MCF 10A (cell line): ENCODE measurements at regions of chr5 and their contacts with region 1.

Region 1: DNA sequence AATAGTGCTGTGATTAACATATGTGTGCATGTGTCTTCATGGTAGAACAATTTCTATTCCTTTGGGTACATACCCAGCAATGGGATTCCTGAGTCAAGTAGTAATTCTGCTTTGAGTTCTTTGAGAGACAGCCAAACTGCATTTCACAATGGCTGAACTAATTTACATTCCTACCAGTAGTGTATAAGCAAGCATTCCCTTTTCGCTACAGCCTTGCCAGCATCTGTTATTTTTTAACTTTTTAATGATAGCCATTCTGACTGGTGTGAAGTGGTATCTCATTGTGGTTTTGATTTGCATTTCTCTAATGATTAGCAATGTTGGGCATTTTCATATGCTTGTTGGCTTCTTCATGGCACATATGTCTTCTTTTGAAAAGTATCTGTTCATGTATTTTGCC is 308.5 kb downstream of the ARRDC3 start:
- DNase-seq: peak; percentile 41
- H3K4me3 Mint-ChIP-seq: no peak overlapping the region
- H3K27ac Mint-ChIP-seq: peak overlapping the region; percentile 28
- H3K4me1 Mint-ChIP-seq: peaks cover 38% of the 10 kb centered on the region
- H3K27me3 Mint-ChIP-seq: no peaks in the 10 kb centered on the region
- CTCF ChIP-seq: peak; percentile 15

Region 2: GRCh38 chr5:91059409-91059808 is 15.2 kb before region 1 on chr5:
- CTCF ChIA-PET with region 1: interaction called, 8 read pairs
- POLR2A ChIA-PET with region 1: interaction called, 21 read pairs
- intact Hi-C with region 1: no loop called
- DNase-seq: no peak
- H3K4me3 Mint-ChIP-seq: no peak overlapping the region
- H3K27ac Mint-ChIP-seq: no peak overlapping the region
- H3K4me1 Mint-ChIP-seq: peaks cover 15% of the 10 kb centered on the region
- H3K27me3 Mint-ChIP-seq: no peaks in the 10 kb centered on the region
- CTCF ChIP-seq: no peak

Region 3: DNA sequence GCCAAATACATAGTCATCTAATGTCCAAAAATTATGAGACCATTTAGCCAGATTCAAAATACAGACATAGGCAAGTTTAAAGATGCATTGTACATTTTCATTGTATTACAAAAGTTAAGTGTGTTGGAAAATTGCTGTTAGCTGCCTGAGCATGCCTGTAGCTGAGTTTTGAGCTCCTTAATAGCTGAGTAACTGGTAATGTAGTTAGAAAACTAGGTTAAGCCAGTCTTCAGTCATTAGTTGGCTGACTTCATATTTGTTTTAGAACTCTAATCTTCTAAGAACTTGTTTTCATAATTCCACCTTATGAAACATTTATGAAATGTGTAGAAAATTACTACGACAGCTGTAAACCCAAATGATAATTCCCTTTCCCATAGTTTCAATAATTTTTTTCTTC is 15.1 kb after region 1 on chr5:
- CTCF ChIA-PET with region 1: interaction called, 3 read pairs
- POLR2A ChIA-PET with region 1: interaction called, 18 read pairs
- intact Hi-C with region 1: no loop called
- DNase-seq: no peak
- H3K4me3 Mint-ChIP-seq: no peak overlapping the region
- H3K27ac Mint-ChIP-seq: no peak overlapping the region
- H3K4me1 Mint-ChIP-seq: peaks cover 5% of the 10 kb centered on the region
- H3K27me3 Mint-ChIP-seq: no peaks in the 10 kb centered on the region
- CTCF ChIP-seq: no peak

Region 4: GRCh38 chr5:91095313-91095712 is 20.7 kb after region 1 on chr5:
- CTCF ChIA-PET with region 1: no interaction called
- POLR2A ChIA-PET with region 1: interaction called, 18 read pairs
- intact Hi-C with region 1: no loop called
- DNase-seq: no peak
- H3K4me3 Mint-ChIP-seq: no peak overlapping the region
- H3K27ac Mint-ChIP-seq: no peak overlapping the region
- H3K4me1 Mint-ChIP-seq: peaks cover 10% of the 10 kb centered on the region
- H3K27me3 Mint-ChIP-seq: no peaks in the 10 kb centered on the region
- CTCF ChIP-seq: no peak

Region 5: GRCh38 chr5:91119981-91120850 is 45.6 kb after region 1 on chr5:
- CTCF ChIA-PET with region 1: no interaction called
- POLR2A ChIA-PET with region 1: no interaction called
- intact Hi-C with region 1: no loop called
- DNase-seq: no peak
- H3K4me3 Mint-ChIP-seq: no peak overlapping the region
- H3K27ac Mint-ChIP-seq: peak overlapping the region; percentile 78
- H3K4me1 Mint-ChIP-seq: no peaks in the 10 kb centered on the region
- H3K27me3 Mint-ChIP-seq: no peaks in the 10 kb centered on the region
- CTCF ChIP-seq: no peak